ENCODE measurements at regions of chr4 and their contacts with region 1.

Region 1: DNA sequence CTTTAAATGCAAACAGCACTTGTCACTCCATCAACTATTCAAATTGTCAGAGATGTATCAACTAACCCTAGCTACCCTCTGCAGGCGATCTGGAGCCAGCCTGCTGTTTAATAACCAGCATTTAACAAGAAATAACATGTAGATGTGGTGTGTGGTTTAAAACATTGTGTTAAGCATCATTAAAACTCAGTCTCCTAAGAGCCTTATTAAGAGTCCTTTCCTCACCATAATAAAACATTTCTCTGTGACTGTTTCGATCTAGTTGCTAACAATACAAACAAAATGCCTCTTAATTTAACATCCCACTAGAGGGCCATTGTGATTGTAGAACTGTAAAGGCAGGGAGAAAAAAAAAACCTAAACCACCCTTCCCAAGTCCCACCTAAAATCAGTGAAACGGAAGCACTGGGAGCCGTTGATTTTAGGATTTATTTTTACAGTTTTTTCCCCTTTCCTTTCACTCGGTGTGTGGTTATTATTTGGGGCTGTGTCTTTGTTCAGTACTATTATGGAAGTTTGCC is 708.6 kb downstream of the C4orf33 start:
- DNase-seq: no peak
- ATAC-seq: no peak

Region 2: GRCh38 chr4:129545599-129546278 is 258.8 kb before region 1 on chr4:
- intact Hi-C with region 1: no loop called
- DNase-seq: peak; percentile 11 to 61
- ATAC-seq: no peak

Region 3: DNA sequence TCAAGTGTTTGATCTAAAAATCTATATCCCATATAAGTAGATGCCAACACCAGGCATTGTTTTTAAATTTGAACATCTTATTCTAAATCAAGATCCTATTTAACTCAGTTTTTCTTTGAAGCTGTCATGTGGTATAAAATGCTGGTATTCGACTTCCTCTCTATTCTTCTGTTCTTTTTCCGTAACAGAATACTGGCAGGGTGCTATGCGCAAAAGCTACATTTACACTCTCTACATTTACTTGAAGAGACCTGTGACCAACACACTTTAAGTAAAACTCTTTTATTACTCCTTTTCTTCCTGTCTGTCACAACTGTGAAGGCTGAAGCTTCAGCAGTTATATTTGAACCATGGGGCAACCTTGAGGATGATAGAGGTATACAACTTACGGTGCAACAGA is 95.7 kb before region 1 on chr4:
- intact Hi-C with region 1: loop called in 1 of 2 experiments (anchors 10 kb)
- DNase-seq: no peak
- ATAC-seq: no peak